ENCODE measurements at regions of chr17 and their contacts with region 1.

Region 1: GRCh38 chr17:42405963-42406495 is 17.0 kb downstream of the CAVIN1 start:
- DNase-seq: peak; percentile 72 to 90 (median 83)
- ATAC-seq: peak; percentile 78
- H3K4me3 ChIP-seq: no peak overlapping the region
- H3K4me3 Mint-ChIP-seq: no peak overlapping the region
- H3K27ac ChIP-seq: no peak overlapping the region
- H3K27ac Mint-ChIP-seq: no peak overlapping the region
- H3K4me1 ChIP-seq: peaks cover 14% of the 10 kb centered on the region
- H3K4me1 Mint-ChIP-seq: peaks cover 8% of the 10 kb centered on the region
- H3K27me3 ChIP-seq: no peaks in the 10 kb centered on the region
- H3K27me3 Mint-ChIP-seq: no peaks in the 10 kb centered on the region
- CTCF ChIP-seq: peak; percentile 91

Region 2: GRCh38 chr17:41966463-41967140 is 439.4 kb before region 1 on chr17 and contains the start of gene CNP:
- CTCF ChIA-PET with region 1: no interaction called
- POLR2A ChIA-PET with region 1: no interaction called
- intact Hi-C with region 1: loop called in 1 of 2 experiments (anchors 2 kb)
- DNase-seq: peak; percentile 77 to 95 (median 92)
- ATAC-seq: peak; percentile 88
- H3K4me3 ChIP-seq: peak within 1 kb of the TSS; percentile 75 to 89
- H3K4me3 Mint-ChIP-seq: peak within 1 kb of the TSS; percentile 83
- H3K27ac ChIP-seq: peak within 1 kb of the TSS; percentile 75 to 79
- H3K27ac Mint-ChIP-seq: peak within 1 kb of the TSS; percentile 94
- H3K4me1 ChIP-seq: peaks cover 33% of the 10 kb centered on the region
- H3K4me1 Mint-ChIP-seq: peaks cover 44% of the 10 kb centered on the region
- H3K27me3 ChIP-seq: no peaks in the 10 kb centered on the region
- H3K27me3 Mint-ChIP-seq: no peaks in the 10 kb centered on the region
- CTCF ChIP-seq: no peak
- total RNA-seq, gene CNP: 16.7 to 18.8 TPM

Region 3: GRCh38 chr17:42183741-42184711 is 222.0 kb before region 1 on chr17:
- CTCF ChIA-PET with region 1: no interaction called
- POLR2A ChIA-PET with region 1: no interaction called
- intact Hi-C with region 1: loop called in 1 of 2 experiments (anchors 5 kb)
- DNase-seq: peak; percentile 49 to 88 (median 74)
- ATAC-seq: peak; percentile 54
- H3K4me3 ChIP-seq: peak overlapping the region; percentile 75 to 91
- H3K4me3 Mint-ChIP-seq: peak overlapping the region; percentile 90
- H3K27ac ChIP-seq: peak overlapping the region; percentile 42 to 74
- H3K27ac Mint-ChIP-seq: peak overlapping the region; percentile 83
- H3K4me1 ChIP-seq: peaks cover 35% of the 10 kb centered on the region
- H3K4me1 Mint-ChIP-seq: peaks cover 37% of the 10 kb centered on the region
- H3K27me3 ChIP-seq: peaks cover 8 to 9% of the 10 kb centered on the region in 2 experiments
- H3K27me3 Mint-ChIP-seq: peaks cover 17% of the 10 kb centered on the region
- CTCF ChIP-seq: peak; percentile 68

Region 4: GRCh38 chr17:42312285-42313130 is 93.5 kb before region 1 on chr17:
- CTCF ChIA-PET with region 1: interaction called, 672 read pairs
- POLR2A ChIA-PET with region 1: interaction called, 11 read pairs
- intact Hi-C with region 1: loop called in 1 of 2 experiments (anchors 1 kb)
- DNase-seq: peak; percentile 45 to 89 (median 79)
- ATAC-seq: peak; percentile 61
- H3K4me3 ChIP-seq: peak overlapping the region; percentile 20 to 38
- H3K4me3 Mint-ChIP-seq: peak overlapping the region; percentile 74
- H3K27ac ChIP-seq: peak overlapping the region; percentile 31 to 66
- H3K27ac Mint-ChIP-seq: peak overlapping the region; percentile 86
- H3K4me1 ChIP-seq: peaks cover 69% of the 10 kb centered on the region
- H3K4me1 Mint-ChIP-seq: peaks cover 72% of the 10 kb centered on the region
- H3K27me3 ChIP-seq: no peaks in the 10 kb centered on the region
- H3K27me3 Mint-ChIP-seq: no peaks in the 10 kb centered on the region
- CTCF ChIP-seq: peak; percentile 62

Region 5: GRCh38 chr17:42337442-42337841 is 68.6 kb before region 1 on chr17:
- CTCF ChIA-PET with region 1: interaction called, 12 read pairs
- POLR2A ChIA-PET with region 1: no interaction called
- intact Hi-C with region 1: no loop called
- DNase-seq: peak; percentile 31 to 87 (median 67)
- ATAC-seq: peak; percentile 85
- H3K4me3 ChIP-seq: no peak overlapping the region
- H3K4me3 Mint-ChIP-seq: peak overlapping the region; percentile 57
- H3K27ac ChIP-seq: peak overlapping the region; percentile 41 to 54
- H3K27ac Mint-ChIP-seq: peak overlapping the region; percentile 92
- H3K4me1 ChIP-seq: peaks cover 31% of the 10 kb centered on the region
- H3K4me1 Mint-ChIP-seq: peaks cover 39% of the 10 kb centered on the region
- H3K27me3 ChIP-seq: no peaks in the 10 kb centered on the region
- H3K27me3 Mint-ChIP-seq: no peaks in the 10 kb centered on the region
- CTCF ChIP-seq: no peak

Region 6: DNA sequence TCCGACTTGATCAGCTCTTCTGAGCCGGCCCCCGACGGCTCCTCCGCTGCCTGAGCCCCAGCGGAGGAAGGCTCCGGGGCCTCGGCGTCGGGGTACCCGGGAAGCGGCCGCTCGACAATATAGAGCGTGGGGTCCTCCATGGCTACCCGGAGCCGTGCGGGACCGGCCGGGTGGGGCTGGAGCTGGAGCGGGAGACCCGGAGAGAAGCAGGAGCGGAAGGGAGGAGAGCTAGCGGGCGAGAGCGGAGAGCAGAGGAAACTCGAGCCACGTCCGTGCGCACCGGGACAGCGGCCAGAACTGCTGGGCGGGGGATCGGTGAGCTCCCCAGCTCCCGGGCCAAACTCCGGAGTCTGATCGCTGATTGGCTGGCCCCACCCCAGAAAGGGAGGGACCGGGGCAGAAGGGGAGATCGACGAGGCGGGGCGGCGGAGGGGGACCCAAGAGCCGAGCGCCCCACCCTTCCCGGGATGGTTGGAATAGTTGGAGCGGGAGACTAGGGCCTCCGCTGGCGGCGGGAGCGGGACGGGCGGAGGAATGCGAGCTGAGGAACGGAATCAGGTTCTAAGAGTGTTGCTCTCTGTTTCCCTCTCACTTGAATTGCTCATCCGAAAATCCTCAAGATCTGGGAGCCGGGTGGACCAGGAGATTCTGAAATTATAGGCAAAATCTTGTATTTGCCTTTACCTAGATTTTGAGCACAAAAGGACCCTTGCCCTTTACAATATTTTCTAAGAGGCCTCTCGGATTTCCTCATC is 17.1 kb after region 1 on chr17 and contains the start of gene CAVIN1:
- CTCF ChIA-PET with region 1: interaction called, 14 read pairs
- POLR2A ChIA-PET with region 1: interaction called, 3 read pairs
- intact Hi-C with region 1: no loop called
- DNase-seq: no peak
- ATAC-seq: peak; percentile 12
- H3K4me3 ChIP-seq: peak within 1 kb of the TSS; percentile 26 to 35
- H3K4me3 Mint-ChIP-seq: peak within 1 kb of the TSS; percentile 86
- H3K27ac ChIP-seq: no peak within 1 kb of the TSS
- H3K27ac Mint-ChIP-seq: no peak within 1 kb of the TSS
- H3K4me1 ChIP-seq: peaks cover 11% of the 10 kb centered on the region
- H3K4me1 Mint-ChIP-seq: peaks cover 15% of the 10 kb centered on the region
- H3K27me3 ChIP-seq: peaks cover 11 to 17% of the 10 kb centered on the region in 2 experiments
- H3K27me3 Mint-ChIP-seq: peaks cover 34% of the 10 kb centered on the region
- CTCF ChIP-seq: no peak
- total RNA-seq, gene CAVIN1: not detected

Region 7: GRCh38 chr17:42527273-42527703 is 121.3 kb after region 1 on chr17:
- CTCF ChIA-PET with region 1: interaction called, 77 read pairs
- POLR2A ChIA-PET with region 1: no interaction called
- intact Hi-C with region 1: loop called in 1 of 2 experiments (anchors 1 kb)
- DNase-seq: peak; percentile 34 to 85 (median 70)
- ATAC-seq: peak; percentile 70
- H3K4me3 ChIP-seq: no peak overlapping the region
- H3K4me3 Mint-ChIP-seq: peak overlapping the region; percentile 9
- H3K27ac ChIP-seq: no peak overlapping the region
- H3K27ac Mint-ChIP-seq: no peak overlapping the region
- H3K4me1 ChIP-seq: peaks cover 41% of the 10 kb centered on the region
- H3K4me1 Mint-ChIP-seq: peaks cover 37% of the 10 kb centered on the region
- H3K27me3 ChIP-seq: no peaks in the 10 kb centered on the region
- H3K27me3 Mint-ChIP-seq: no peaks in the 10 kb centered on the region
- CTCF ChIP-seq: peak; percentile 72

Measured in CD8-positive, alpha-beta T cell (primary cell).